ENCODE measurements at regions of chr19 and their contacts with region 1.

Region 1: GRCh38 chr19:44689056-44689895 is 9.7 kb upstream of the CEACAM16 start:
- DNase-seq: peak in 1 of 2 donors; percentile 80
- H3K4me3 ChIP-seq: no peak overlapping the region
- H3K27ac ChIP-seq: no peak overlapping the region
- H3K4me1 ChIP-seq: peaks cover 0 to 12% of the 10 kb centered on the region in 2 donors
- H3K27me3 ChIP-seq: no peaks in the 10 kb centered on the region
- CTCF ChIP-seq: peak; percentile 91 to 95 (median 91)

Region 2: DNA sequence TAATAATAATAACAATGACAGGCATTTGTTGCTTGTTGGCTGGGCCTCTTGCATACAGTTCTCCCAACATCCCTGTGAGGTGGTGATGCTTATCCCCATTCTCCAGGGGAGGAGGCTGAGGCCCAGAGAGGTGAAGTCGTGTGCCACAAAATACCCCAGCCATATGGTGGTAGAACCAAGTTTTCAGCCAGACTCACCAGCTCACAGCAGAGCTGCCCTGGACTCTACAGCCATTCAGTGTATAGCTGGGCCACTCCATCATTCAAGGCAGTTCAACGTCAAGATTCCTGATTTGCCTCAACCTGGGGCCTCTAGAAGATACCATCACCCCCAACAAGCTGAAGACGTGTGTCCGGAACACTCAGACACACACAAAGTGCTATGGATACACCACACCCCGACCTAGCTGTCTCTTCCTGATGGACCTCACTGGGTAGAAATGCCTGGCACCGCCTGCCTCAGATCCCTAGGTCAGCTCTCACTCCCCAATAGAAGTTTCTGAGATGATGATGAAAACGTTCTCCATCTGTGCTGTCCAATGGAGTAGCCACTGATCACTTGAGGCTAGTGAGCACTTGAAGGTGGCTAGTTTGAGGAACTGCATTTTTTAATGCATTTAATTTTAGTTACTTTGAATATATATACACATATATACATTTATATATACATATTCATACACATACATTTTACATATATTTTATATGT is 22.3 kb before region 1 on chr19:
- intact Hi-C with region 1: no loop called
- DNase-seq: no peak
- H3K4me3 ChIP-seq: no peak overlapping the region
- H3K27ac ChIP-seq: no peak overlapping the region
- H3K4me1 ChIP-seq: no peaks in the 10 kb centered on the region
- H3K27me3 ChIP-seq: no peaks in the 10 kb centered on the region
- CTCF ChIP-seq: no peak

Region 3: DNA sequence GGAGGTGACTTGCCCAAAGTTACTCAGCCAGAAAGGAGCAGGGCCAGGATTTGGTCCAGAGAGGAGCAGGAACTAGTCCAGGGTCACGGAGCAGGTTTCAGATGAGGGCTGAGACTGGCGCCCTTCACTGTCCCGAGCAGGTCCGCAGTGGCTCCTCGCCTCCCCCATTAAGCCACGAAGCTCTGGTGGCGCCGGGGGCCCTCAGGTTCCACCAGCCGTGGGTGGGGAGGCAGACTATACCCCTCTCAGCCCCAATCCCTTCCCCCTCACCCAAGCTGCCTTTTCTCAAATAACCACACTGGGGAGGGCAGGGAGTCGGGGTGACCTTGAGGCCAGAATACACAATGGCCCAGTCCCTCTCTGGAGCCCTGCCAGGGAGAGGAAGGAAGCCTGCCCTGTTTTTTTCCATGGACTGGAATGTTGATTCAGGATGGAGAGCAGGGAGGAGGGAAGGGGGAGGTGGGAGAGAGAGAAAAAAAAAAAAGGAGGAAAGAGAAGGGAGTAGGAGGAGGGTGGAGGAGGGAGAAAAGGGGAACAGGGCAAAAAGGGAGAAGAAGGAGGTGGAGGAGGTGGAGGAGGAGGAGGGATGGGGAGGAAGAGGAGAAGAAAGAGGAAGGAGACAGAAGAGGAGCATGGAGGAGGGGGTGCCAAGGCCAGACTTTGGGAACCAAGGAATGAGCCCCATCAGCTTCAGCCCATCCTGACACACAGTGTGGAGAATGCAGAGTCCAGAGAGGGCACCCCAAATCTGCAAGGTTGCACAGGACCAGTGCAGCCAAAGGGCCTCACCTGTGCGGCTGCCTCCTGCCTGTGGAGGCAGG is 29.4 kb after region 1 on chr19:
- intact Hi-C with region 1: loop called (anchors 1 kb)
- DNase-seq: peak in 1 of 2 donors; percentile 84
- H3K4me3 ChIP-seq: peak overlapping the region; percentile 7 to 47
- H3K27ac ChIP-seq: peak overlapping the region; percentile 67 to 85
- H3K4me1 ChIP-seq: peaks cover 5 to 22% of the 10 kb centered on the region in 2 donors
- H3K27me3 ChIP-seq: no peaks in the 10 kb centered on the region
- CTCF ChIP-seq: no peak

Region 4: GRCh38 chr19:44757735-44758505 is 68.6 kb after region 1 on chr19:
- intact Hi-C with region 1: loop called (anchors 5 kb)
- DNase-seq: peak in 1 of 2 donors; percentile 83
- H3K4me3 ChIP-seq: peak overlapping the region; percentile 59 to 60
- H3K27ac ChIP-seq: peak overlapping the region; percentile 84 to 91
- H3K4me1 ChIP-seq: peaks cover 16 to 46% of the 10 kb centered on the region in 2 donors
- H3K27me3 ChIP-seq: no peaks in the 10 kb centered on the region
- CTCF ChIP-seq: peak in 2 of 3 experiments; percentile 22 to 55

Region 5: DNA sequence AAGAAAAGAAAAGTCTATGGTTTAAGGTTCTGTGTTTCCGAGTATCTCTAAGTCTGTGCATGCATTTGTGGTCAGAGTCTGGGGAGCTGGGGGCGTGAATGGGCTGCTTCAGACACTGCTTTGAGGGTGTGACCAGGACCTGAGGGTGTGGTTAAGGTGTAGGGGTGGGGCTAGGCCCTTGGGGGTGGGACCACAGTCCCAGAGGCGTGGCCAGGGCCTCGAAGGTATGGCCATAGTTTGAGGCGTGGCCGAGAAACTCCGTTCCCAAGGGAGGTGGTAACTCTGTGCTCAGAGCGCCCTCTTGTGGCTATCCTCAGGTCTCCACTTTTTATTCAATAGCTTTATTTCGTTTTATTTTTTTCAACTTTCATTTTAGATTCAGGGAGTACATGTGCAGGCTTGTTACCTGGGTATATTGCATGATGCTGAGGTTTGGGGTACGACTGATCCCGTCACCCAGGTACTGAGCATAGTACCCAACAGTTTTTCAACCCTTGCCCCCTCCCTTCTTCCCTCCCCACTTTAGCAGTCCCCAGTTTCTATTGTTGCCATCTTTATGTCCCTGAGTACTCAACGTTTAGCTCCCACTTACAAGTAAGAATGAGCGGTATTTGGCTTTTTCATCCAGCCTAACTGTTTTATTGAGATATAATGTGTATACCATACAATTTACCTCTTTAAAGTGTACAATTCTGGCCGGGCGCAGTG is 81.4 kb after region 1 on chr19:
- intact Hi-C with region 1: loop called (anchors 1 kb)
- DNase-seq: peak; percentile 84 to 96
- H3K4me3 ChIP-seq: no peak overlapping the region
- H3K27ac ChIP-seq: peak overlapping the region in 1 of 2 donors; percentile 5
- H3K4me1 ChIP-seq: peaks cover 0 to 2% of the 10 kb centered on the region in 2 donors
- H3K27me3 ChIP-seq: no peaks in the 10 kb centered on the region
- CTCF ChIP-seq: peak; percentile 80 to 91 (median 85)

Measured in ascending aorta (tissue), 2 donors.